ENCODE measurements at regions of chr6 and their contacts with region 1.

Region 1: DNA sequence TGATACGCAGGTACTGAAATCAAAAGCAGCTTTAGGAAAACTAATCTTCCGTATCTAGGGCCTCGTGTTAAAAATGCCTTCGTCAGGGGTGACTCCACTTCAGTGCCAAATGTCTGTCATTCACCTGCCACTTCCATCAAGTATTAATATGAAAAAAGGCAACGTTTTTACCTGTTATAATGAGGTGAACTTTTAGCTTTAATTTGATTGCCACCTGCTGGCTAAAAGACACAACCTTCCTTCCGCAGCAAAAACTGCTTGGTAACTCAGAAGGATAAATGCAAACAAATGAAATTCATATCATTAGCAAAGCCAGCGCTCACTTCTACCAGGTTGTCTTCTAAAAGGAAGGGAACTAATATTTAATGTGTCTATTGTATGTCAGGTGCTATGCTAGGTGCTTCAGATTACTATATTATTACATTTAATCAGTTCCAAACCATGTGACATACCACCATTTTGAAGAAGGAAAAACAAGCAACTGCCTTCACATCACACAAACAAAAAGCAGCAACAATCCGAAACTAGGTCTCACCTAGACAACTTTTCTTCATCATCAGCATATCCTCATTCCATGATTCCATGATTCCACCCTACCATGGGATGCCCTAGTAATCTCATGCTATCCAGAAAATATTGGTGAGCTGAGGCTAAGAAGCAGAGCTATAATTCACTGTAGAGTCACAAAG is 20.6 kb upstream of the ARHGAP18 start:
- DNase-seq: peak in 4 of 9 experiments; percentile 16 to 70 (median 46)
- ATAC-seq: peak; percentile 67
- H3K4me3 ChIP-seq: no peak overlapping the region
- H3K4me3 Mint-ChIP-seq: no peak overlapping the region
- H3K27ac ChIP-seq: no peak overlapping the region
- H3K27ac Mint-ChIP-seq: no peak overlapping the region
- H3K4me1 ChIP-seq: no peaks in the 10 kb centered on the region
- H3K4me1 Mint-ChIP-seq: peaks cover 11% of the 10 kb centered on the region
- H3K27me3 ChIP-seq: no peaks in the 10 kb centered on the region
- H3K27me3 Mint-ChIP-seq: no peaks in the 10 kb centered on the region
- CTCF ChIP-seq: peak; percentile 67

Region 2: GRCh38 chr6:129498950-129499842 is 231.4 kb before region 1 on chr6:
- CTCF ChIA-PET with region 1: interaction called, 21 read pairs
- POLR2A ChIA-PET with region 1: no interaction called
- intact Hi-C with region 1: loop called (anchors 1 to 5 kb)
- DNase-seq: peak in 3 of 9 experiments; percentile 22 to 76 (median 67)
- ATAC-seq: peak; percentile 68
- H3K4me3 ChIP-seq: no peak overlapping the region
- H3K4me3 Mint-ChIP-seq: peak overlapping the region; percentile 53
- H3K27ac ChIP-seq: no peak overlapping the region
- H3K27ac Mint-ChIP-seq: no peak overlapping the region
- H3K4me1 ChIP-seq: peaks cover 4% of the 10 kb centered on the region
- H3K4me1 Mint-ChIP-seq: peaks cover 9% of the 10 kb centered on the region
- H3K27me3 ChIP-seq: no peaks in the 10 kb centered on the region
- H3K27me3 Mint-ChIP-seq: no peaks in the 10 kb centered on the region
- CTCF ChIP-seq: peak; percentile 69

Region 3: DNA sequence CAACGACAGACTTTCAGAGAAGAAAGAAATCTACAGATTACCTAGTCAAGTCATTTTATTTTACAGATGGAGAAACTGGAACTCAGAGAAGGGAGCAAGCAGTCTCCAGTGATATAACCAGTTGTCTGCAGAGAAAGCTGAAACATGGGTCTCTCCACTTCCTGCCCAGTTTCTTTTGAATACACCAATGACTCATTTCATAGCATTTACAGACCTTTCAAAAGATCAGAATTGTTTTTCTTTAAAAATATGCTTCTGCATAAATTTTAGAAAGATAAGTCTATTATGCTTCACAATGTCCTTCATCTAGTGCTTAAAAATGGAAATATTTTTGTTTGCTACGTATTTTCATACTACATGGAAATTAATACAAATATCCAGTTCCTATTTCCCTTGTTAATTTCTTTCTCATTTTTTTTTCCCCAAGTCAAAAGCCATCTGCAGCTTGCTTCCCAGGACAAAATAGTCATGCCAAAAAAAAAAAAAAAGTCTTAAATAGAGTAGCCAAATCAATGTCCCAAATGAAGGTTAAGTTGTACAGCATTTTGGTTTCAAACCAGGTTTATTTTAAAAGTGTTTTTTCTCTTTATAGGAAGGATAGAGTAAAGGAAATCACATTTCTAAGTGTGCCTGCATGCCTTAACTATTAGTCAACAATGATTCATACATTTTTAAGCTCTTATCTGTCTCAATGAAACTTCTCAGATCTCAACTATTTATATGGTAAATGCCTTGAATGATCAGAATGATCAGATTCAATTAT is 57.6 kb before region 1 on chr6:
- CTCF ChIA-PET with region 1: interaction called, 15 read pairs
- POLR2A ChIA-PET with region 1: no interaction called
- intact Hi-C with region 1: loop called (anchors 1 to 2 kb)
- DNase-seq: peak in 3 of 9 experiments; percentile 14 to 59 (median 39)
- ATAC-seq: peak; percentile 58
- H3K4me3 ChIP-seq: no peak overlapping the region
- H3K4me3 Mint-ChIP-seq: peak overlapping the region; percentile 74
- H3K27ac ChIP-seq: peak overlapping the region in 1 of 2 experiments; percentile 59
- H3K27ac Mint-ChIP-seq: peak overlapping the region; percentile 85
- H3K4me1 ChIP-seq: peaks cover 21% of the 10 kb centered on the region
- H3K4me1 Mint-ChIP-seq: peaks cover 22% of the 10 kb centered on the region
- H3K27me3 ChIP-seq: no peaks in the 10 kb centered on the region
- H3K27me3 Mint-ChIP-seq: no peaks in the 10 kb centered on the region
- CTCF ChIP-seq: no peak

Region 4: GRCh38 chr6:129719692-129720091 is 10.9 kb before region 1 on chr6:
- CTCF ChIA-PET with region 1: interaction called, 12 read pairs
- POLR2A ChIA-PET with region 1: interaction called, 4 read pairs
- intact Hi-C with region 1: no loop called
- DNase-seq: no peak
- ATAC-seq: no peak
- H3K4me3 ChIP-seq: no peak overlapping the region
- H3K4me3 Mint-ChIP-seq: no peak overlapping the region
- H3K27ac ChIP-seq: no peak overlapping the region
- H3K27ac Mint-ChIP-seq: no peak overlapping the region
- H3K4me1 ChIP-seq: peaks cover 4% of the 10 kb centered on the region
- H3K4me1 Mint-ChIP-seq: peaks cover 3% of the 10 kb centered on the region
- H3K27me3 ChIP-seq: no peaks in the 10 kb centered on the region
- H3K27me3 Mint-ChIP-seq: no peaks in the 10 kb centered on the region
- CTCF ChIP-seq: no peak

Region 5: DNA sequence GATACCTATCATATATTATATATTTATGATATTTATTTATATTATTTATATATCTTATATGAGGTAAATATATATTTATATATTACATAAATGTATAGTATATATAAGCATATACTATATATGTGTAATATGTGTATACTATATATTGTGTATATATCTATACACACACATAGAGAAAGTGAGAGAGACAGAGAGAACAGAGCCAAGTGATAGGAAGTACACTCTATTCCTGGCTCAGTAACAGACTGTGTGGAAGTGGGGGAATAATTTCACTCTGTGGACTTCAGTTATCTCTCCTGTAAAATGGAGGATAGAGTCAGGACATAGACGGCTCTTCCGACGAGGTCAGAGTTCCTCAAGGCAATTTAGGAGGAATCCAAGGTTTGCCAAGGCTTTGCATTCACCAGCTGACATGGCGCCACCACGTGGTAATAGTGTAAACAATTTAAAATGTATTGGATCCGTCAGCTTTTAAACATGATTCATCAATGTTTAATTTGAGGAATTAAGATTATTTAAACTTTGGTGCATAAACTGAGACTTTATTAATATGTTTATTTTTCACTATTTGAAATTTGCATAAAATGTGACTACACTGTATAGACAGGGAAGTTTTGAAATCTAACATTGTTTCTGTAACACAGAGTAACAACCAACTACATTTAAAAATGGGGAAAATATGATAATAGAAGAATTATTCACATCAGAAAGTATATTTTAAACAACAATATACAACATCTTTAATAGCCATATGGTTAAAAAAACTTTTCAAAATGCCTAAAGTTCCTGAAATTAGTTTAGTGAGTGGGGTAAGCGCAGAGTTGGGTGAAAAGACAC is 205.9 kb after region 1 on chr6:
- CTCF ChIA-PET with region 1: no interaction called
- POLR2A ChIA-PET with region 1: no interaction called
- intact Hi-C with region 1: loop called in 1 of 2 experiments (anchors 5 kb)
- DNase-seq: peak in 6 of 9 experiments; percentile 26 to 69 (median 45)
- ATAC-seq: peak; percentile 40
- H3K4me3 ChIP-seq: no peak overlapping the region
- H3K4me3 Mint-ChIP-seq: no peak overlapping the region
- H3K27ac ChIP-seq: no peak overlapping the region
- H3K27ac Mint-ChIP-seq: no peak overlapping the region
- H3K4me1 ChIP-seq: no peaks in the 10 kb centered on the region
- H3K4me1 Mint-ChIP-seq: peaks cover 2% of the 10 kb centered on the region
- H3K27me3 ChIP-seq: no peaks in the 10 kb centered on the region
- H3K27me3 Mint-ChIP-seq: peaks cover 10% of the 10 kb centered on the region
- CTCF ChIP-seq: peak; percentile 76